ENCODE measurements at regions of chr9 and their contacts with region 1.

Region 1: GRCh38 chr9:121107041-121107440 is 32.3 kb downstream of the CNTRL start:
- DNase-seq: peak in 3 of 14 experiments; percentile 56 to 60 (median 56)
- ATAC-seq: peak; percentile 100
- H3K4me3 ChIP-seq: no peak overlapping the region
- H3K4me3 Mint-ChIP-seq: no peak overlapping the region
- H3K27ac ChIP-seq: no peak overlapping the region
- H3K27ac Mint-ChIP-seq: peak overlapping the region; percentile 64
- H3K4me1 ChIP-seq: no peaks in the 10 kb centered on the region
- H3K4me1 Mint-ChIP-seq: peaks cover 27% of the 10 kb centered on the region
- H3K27me3 ChIP-seq: no peaks in the 10 kb centered on the region
- H3K27me3 Mint-ChIP-seq: no peaks in the 10 kb centered on the region
- CTCF ChIP-seq: peak; percentile 59

Region 2: GRCh38 chr9:121085661-121086060 is 21.4 kb before region 1 on chr9:
- CTCF ChIA-PET with region 1: no interaction called
- POLR2A ChIA-PET with region 1: no interaction called
- intact Hi-C with region 1: no loop called
- DNase-seq: no peak
- ATAC-seq: no peak
- H3K4me3 ChIP-seq: no peak overlapping the region
- H3K4me3 Mint-ChIP-seq: no peak overlapping the region
- H3K27ac ChIP-seq: no peak overlapping the region
- H3K27ac Mint-ChIP-seq: no peak overlapping the region
- H3K4me1 ChIP-seq: no peaks in the 10 kb centered on the region
- H3K4me1 Mint-ChIP-seq: peaks cover 37% of the 10 kb centered on the region
- H3K27me3 ChIP-seq: no peaks in the 10 kb centered on the region
- H3K27me3 Mint-ChIP-seq: no peaks in the 10 kb centered on the region
- CTCF ChIP-seq: no peak

Region 3: GRCh38 chr9:121156263-121156731 is 49.3 kb after region 1 on chr9:
- CTCF ChIA-PET with region 1: interaction called, 3 read pairs
- POLR2A ChIA-PET with region 1: no interaction called
- intact Hi-C with region 1: loop called in 1 of 2 experiments (anchors 5 kb)
- DNase-seq: peak in 3 of 14 experiments; percentile 16 to 50 (median 21)
- ATAC-seq: peak; percentile 48
- H3K4me3 ChIP-seq: no peak overlapping the region
- H3K4me3 Mint-ChIP-seq: no peak overlapping the region
- H3K27ac ChIP-seq: no peak overlapping the region
- H3K27ac Mint-ChIP-seq: peak overlapping the region; percentile 74
- H3K4me1 ChIP-seq: no peaks in the 10 kb centered on the region
- H3K4me1 Mint-ChIP-seq: peaks cover 28% of the 10 kb centered on the region
- H3K27me3 ChIP-seq: no peaks in the 10 kb centered on the region
- H3K27me3 Mint-ChIP-seq: no peaks in the 10 kb centered on the region
- CTCF ChIP-seq: no peak

Region 4: DNA sequence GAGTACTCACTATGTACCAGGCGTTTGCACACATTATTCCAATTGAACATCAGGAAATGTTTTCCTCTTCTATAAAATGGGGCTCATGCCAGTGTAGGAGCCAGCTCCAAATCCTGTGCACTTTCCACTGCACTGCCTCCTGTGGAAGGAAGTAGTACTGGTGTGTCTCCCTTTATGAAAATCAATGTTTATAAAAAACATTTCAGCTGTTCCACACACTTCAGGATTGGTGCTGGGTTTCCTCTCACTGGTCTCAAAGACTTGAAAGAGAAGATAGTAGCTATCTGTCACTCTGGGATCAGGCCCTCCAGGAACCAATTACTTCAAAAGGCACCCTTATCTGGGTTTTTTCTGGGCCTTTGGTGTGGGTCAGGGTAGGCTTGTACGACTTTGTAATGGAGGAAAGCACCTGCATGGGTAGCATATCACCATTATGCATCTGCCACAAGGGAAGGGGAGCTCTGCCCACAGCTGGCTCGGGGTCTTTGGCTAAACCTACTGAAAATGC is 62.1 kb after region 1 on chr9:
- CTCF ChIA-PET with region 1: interaction called, 3 read pairs
- POLR2A ChIA-PET with region 1: interaction called, 6 read pairs
- intact Hi-C with region 1: loop called in 1 of 2 experiments (anchors 2 kb)
- DNase-seq: peak in 7 of 14 experiments; percentile 1 to 60 (median 31)
- ATAC-seq: peak; percentile 95
- H3K4me3 ChIP-seq: no peak overlapping the region
- H3K4me3 Mint-ChIP-seq: peak overlapping the region; percentile 2
- H3K27ac ChIP-seq: peak overlapping the region; percentile 0 to 3
- H3K27ac Mint-ChIP-seq: peak overlapping the region; percentile 80
- H3K4me1 ChIP-seq: peaks cover 11% of the 10 kb centered on the region
- H3K4me1 Mint-ChIP-seq: peaks cover 27% of the 10 kb centered on the region
- H3K27me3 ChIP-seq: no peaks in the 10 kb centered on the region
- H3K27me3 Mint-ChIP-seq: no peaks in the 10 kb centered on the region
- CTCF ChIP-seq: peak; percentile 66

Measured in CD4-positive, alpha-beta T cell (primary cell).